ENCODE measurements at regions of chr5 and their contacts with region 1.

Region 1: DNA sequence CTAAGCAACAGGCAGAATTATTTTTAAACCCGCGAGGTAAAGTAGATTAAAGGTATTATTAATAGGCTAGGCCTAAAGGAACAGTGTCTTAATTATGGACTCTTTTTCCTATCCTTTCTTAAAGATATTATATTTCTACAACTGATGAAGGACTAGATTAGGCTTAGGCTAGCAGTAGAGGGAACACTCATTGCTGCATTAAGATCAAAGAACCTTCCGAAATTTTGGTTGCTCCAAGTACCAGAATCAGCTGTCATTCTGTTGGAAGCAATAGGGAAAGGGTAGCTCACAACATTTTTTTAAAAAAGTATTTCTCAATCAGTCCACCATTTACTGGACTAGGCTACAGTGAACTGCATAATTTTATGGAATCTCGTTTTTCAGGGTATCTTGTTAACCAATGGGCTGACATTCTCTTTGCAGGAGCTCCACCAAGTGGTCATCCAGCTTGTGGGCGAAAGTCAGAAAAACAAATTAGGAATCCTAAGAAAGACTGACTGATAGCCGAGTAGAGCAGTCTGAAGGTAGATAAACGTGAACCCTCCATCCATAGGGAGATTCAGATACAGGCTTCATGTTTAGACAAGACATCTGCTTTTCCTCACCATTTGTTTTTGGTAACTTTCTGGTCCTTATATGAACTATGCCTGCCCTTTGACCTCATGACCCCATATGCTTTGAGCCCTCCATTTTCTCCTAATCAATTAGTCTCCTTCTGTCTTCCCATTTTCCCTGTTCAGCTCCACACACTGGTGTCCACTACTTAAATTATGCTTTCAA is 103.6 kb upstream of the CHD1 start:
- DNase-seq: peak in 3 of 5 donors; percentile 18 to 21 (median 19)
- H3K4me3 ChIP-seq: peak overlapping the region in 1 of 2 donors; percentile 33
- H3K4me3 Mint-ChIP-seq: peak overlapping the region; percentile 82 to 92 (median 88)
- H3K27ac ChIP-seq: peak overlapping the region; percentile 71
- H3K27ac Mint-ChIP-seq: peak overlapping the region; percentile 90 to 99 (median 98)
- H3K4me1 ChIP-seq: peaks cover 69% of the 10 kb centered on the region
- H3K4me1 Mint-ChIP-seq: peaks cover 58 to 89% (median 71%) of the 10 kb centered on the region in 4 donors
- H3K27me3 ChIP-seq: no peaks in the 10 kb centered on the region
- H3K27me3 Mint-ChIP-seq: no peaks in the 10 kb centered on the region

Region 2: GRCh38 chr5:97183100-97183929 is 1849.1 kb before region 1 on chr5 and contains the start of gene RIOK2:
- CTCF ChIA-PET with region 1: no interaction called
- POLR2A ChIA-PET with region 1: interaction called, 5 read pairs
- intact Hi-C with region 1: loop called (anchors 10 kb)
- DNase-seq: peak; percentile 91 to 94 (median 92)
- H3K4me3 ChIP-seq: peak within 1 kb of the TSS; percentile 77 to 87
- H3K4me3 Mint-ChIP-seq: peak within 1 kb of the TSS; percentile 94 to 99 (median 97)
- H3K27ac ChIP-seq: peak within 1 kb of the TSS; percentile 95
- H3K27ac Mint-ChIP-seq: peak within 1 kb of the TSS; percentile 99 to 100 (median 100)
- H3K4me1 ChIP-seq: peaks cover 29% of the 10 kb centered on the region
- H3K4me1 Mint-ChIP-seq: peaks cover 23 to 50% (median 38%) of the 10 kb centered on the region in 4 donors
- H3K27me3 ChIP-seq: no peaks in the 10 kb centered on the region
- H3K27me3 Mint-ChIP-seq: no peaks in the 10 kb centered on the region
- total RNA-seq, gene RIOK2: 38.2 to 40.8 TPM

Region 3: DNA sequence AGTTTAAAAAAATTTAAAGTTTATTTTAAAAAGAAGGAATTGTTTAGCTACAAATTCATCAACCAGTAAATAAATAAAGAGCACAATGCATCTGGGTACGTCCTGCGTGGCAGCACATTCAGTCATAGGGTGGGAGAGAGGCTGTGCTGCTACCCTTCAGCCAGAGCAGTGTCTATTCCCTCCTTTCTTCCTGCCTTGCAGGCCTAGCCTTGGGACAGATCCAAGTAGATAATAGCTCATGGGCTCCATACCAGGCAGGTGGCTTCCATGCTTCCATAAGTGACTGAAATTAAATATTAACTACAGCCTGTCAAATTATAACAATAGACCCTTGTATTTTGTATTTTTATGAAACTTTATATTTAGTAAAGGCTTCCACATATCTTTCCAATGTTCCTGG is 667.3 kb before region 1 on chr5:
- CTCF ChIA-PET with region 1: no interaction called
- POLR2A ChIA-PET with region 1: no interaction called
- intact Hi-C with region 1: no loop called
- DNase-seq: no peak
- H3K4me3 ChIP-seq: no peak overlapping the region
- H3K4me3 Mint-ChIP-seq: no peak overlapping the region
- H3K27ac ChIP-seq: no peak overlapping the region
- H3K27ac Mint-ChIP-seq: no peak overlapping the region
- H3K4me1 ChIP-seq: no peaks in the 10 kb centered on the region
- H3K4me1 Mint-ChIP-seq: no peaks in the 10 kb centered on the region
- H3K27me3 ChIP-seq: no peaks in the 10 kb centered on the region
- H3K27me3 Mint-ChIP-seq: no peaks in the 10 kb centered on the region

Region 4: GRCh38 chr5:98391921-98392625 is 640.4 kb before region 1 on chr5:
- CTCF ChIA-PET with region 1: no interaction called
- POLR2A ChIA-PET with region 1: no interaction called
- intact Hi-C with region 1: no loop called
- DNase-seq: no peak
- H3K4me3 ChIP-seq: no peak overlapping the region
- H3K4me3 Mint-ChIP-seq: no peak overlapping the region
- H3K27ac ChIP-seq: no peak overlapping the region
- H3K27ac Mint-ChIP-seq: no peak overlapping the region
- H3K4me1 ChIP-seq: no peaks in the 10 kb centered on the region
- H3K4me1 Mint-ChIP-seq: no peaks in the 10 kb centered on the region
- H3K27me3 ChIP-seq: no peaks in the 10 kb centered on the region
- H3K27me3 Mint-ChIP-seq: no peaks in the 10 kb centered on the region

Region 5: GRCh38 chr5:98905857-98906690 is 126.3 kb before region 1 on chr5:
- CTCF ChIA-PET with region 1: interaction called, 18 read pairs
- POLR2A ChIA-PET with region 1: interaction called, 7 read pairs
- intact Hi-C with region 1: loop called (anchors 1 kb)
- DNase-seq: peak in 4 of 5 donors; percentile 63 to 69 (median 66)
- H3K4me3 ChIP-seq: no peak overlapping the region
- H3K4me3 Mint-ChIP-seq: peak overlapping the region in 2 of 8 donors; percentile 3 to 11
- H3K27ac ChIP-seq: no peak overlapping the region
- H3K27ac Mint-ChIP-seq: peak overlapping the region in 6 of 7 donors; percentile 1 to 54 (median 10)
- H3K4me1 ChIP-seq: peaks cover 48% of the 10 kb centered on the region
- H3K4me1 Mint-ChIP-seq: peaks cover 33 to 58% (median 44%) of the 10 kb centered on the region in 4 donors
- H3K27me3 ChIP-seq: no peaks in the 10 kb centered on the region
- H3K27me3 Mint-ChIP-seq: no peaks in the 10 kb centered on the region

Region 6: GRCh38 chr5:99019812-99020697 is 12.4 kb before region 1 on chr5:
- CTCF ChIA-PET with region 1: interaction called, 4 read pairs
- POLR2A ChIA-PET with region 1: no interaction called
- intact Hi-C with region 1: loop called (anchors 2 kb)
- DNase-seq: no peak
- H3K4me3 ChIP-seq: no peak overlapping the region
- H3K4me3 Mint-ChIP-seq: no peak overlapping the region
- H3K27ac ChIP-seq: no peak overlapping the region
- H3K27ac Mint-ChIP-seq: peak overlapping the region in 1 of 7 donors; percentile 10
- H3K4me1 ChIP-seq: no peaks in the 10 kb centered on the region
- H3K4me1 Mint-ChIP-seq: peaks cover 0 to 6% (median 3%) of the 10 kb centered on the region in 4 donors
- H3K27me3 ChIP-seq: no peaks in the 10 kb centered on the region
- H3K27me3 Mint-ChIP-seq: no peaks in the 10 kb centered on the region

Region 7: GRCh38 chr5:99045871-99046270 is 13.4 kb after region 1 on chr5:
- CTCF ChIA-PET with region 1: interaction called, 4 read pairs
- POLR2A ChIA-PET with region 1: interaction called, 22 read pairs
- intact Hi-C with region 1: no loop called
- DNase-seq: no peak
- H3K4me3 ChIP-seq: no peak overlapping the region
- H3K4me3 Mint-ChIP-seq: peak overlapping the region in 2 of 8 donors; percentile 25 to 46
- H3K27ac ChIP-seq: no peak overlapping the region
- H3K27ac Mint-ChIP-seq: peak overlapping the region in 3 of 7 donors; percentile 22 to 73 (median 51)
- H3K4me1 ChIP-seq: peaks cover 14% of the 10 kb centered on the region
- H3K4me1 Mint-ChIP-seq: peaks cover 4 to 23% (median 12%) of the 10 kb centered on the region in 4 donors
- H3K27me3 ChIP-seq: no peaks in the 10 kb centered on the region
- H3K27me3 Mint-ChIP-seq: no peaks in the 10 kb centered on the region

Region 8: DNA sequence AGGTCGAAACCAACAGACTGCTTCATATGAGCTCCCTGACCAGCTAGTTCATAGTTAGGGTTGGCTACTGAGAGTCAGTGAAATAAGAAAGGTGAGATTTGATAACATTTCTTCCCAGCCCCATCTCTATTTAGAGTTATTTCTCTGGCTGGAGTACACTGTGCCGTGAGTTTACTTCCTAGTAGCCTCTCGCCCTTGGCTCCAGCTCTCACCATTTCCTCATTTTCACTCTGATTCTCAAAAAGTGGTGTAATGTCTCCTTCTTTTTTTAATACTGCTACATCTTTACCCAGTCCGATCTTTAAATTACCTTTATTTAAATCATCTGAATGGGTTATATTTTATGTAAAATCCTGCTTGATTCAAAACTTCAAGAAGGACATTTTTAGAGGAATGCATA is 1402.4 kb after region 1 on chr5:
- CTCF ChIA-PET with region 1: no interaction called
- POLR2A ChIA-PET with region 1: no interaction called
- intact Hi-C with region 1: no loop called
- DNase-seq: no peak
- H3K4me3 ChIP-seq: no peak overlapping the region
- H3K4me3 Mint-ChIP-seq: no peak overlapping the region
- H3K27ac ChIP-seq: no peak overlapping the region
- H3K27ac Mint-ChIP-seq: no peak overlapping the region
- H3K4me1 ChIP-seq: no peaks in the 10 kb centered on the region
- H3K4me1 Mint-ChIP-seq: no peaks in the 10 kb centered on the region
- H3K27me3 ChIP-seq: no peaks in the 10 kb centered on the region
- H3K27me3 Mint-ChIP-seq: peaks cover 0 to 2% of the 10 kb centered on the region in 2 donors

Measured in CD4-positive, alpha-beta memory T cell (primary cell).